ENCODE measurements at regions of chr6 and their contacts with region 1.

Region 1: DNA sequence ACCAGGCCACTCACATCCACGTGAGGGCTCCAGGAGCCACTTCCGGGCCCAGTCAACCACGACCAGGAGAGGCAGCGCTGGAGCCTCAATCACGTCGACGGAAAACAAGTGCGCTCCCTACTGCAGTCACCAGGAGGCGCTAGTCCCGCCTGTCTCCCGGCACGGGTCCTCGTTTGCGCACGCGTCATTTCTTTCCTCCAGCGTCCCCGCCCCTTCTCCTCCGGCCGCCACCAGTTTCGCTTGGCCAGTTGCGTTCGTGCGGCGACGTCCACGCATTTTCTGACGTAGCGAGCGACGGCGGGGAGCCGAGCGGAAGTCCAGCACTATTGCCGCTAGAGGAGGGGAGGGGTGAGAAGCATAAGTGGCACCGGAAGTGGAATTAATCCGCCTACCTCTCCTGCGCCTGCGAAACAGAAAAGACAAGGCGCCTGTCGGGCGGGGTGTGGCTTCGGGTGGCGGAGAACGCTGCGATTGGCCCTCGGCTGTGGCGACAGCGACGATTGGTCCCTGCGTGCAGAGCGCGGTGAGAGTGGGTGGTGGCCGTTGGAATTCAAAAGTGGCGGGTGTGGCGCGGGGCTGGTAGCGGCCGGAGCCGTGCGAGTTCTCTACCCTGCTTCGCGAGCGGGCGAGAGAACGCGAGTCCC is at the start of gene KIFC1:
- DNase-seq: peak; percentile 99 to 100
- ATAC-seq: peak; percentile 87 to 96 (median 88)
- H3K4me3 ChIP-seq: peak within 1 kb of the TSS; percentile 67
- H3K4me3 Mint-ChIP-seq: peak within 1 kb of the TSS; percentile 92
- H3K27ac ChIP-seq: peak within 1 kb of the TSS; percentile 85
- H3K27ac Mint-ChIP-seq: peak within 1 kb of the TSS; percentile 93
- H3K4me1 ChIP-seq: peaks cover 18% of the 10 kb centered on the region
- H3K4me1 Mint-ChIP-seq: peaks cover 25 to 29% of the 10 kb centered on the region in 2 donors
- H3K27me3 ChIP-seq: no peaks in the 10 kb centered on the region
- H3K27me3 Mint-ChIP-seq: no peaks in the 10 kb centered on the region
- CTCF ChIP-seq: peak; percentile 96
- total RNA-seq, gene KIFC1: 2.7 to 4.6 (median 3.3) TPM

Region 2: GRCh38 chr6:33313709-33314514 is 77.5 kb before region 1 on chr6 and contains the start of gene TAPBP:
- intact Hi-C with region 1: loop called (anchors 1 kb)
- DNase-seq: peak; percentile 84 to 96
- ATAC-seq: peak; percentile 56 to 73 (median 68)
- H3K4me3 ChIP-seq: peak within 1 kb of the TSS; percentile 91
- H3K4me3 Mint-ChIP-seq: peak within 1 kb of the TSS; percentile 96
- H3K27ac ChIP-seq: peak within 1 kb of the TSS; percentile 98
- H3K27ac Mint-ChIP-seq: peak within 1 kb of the TSS; percentile 98 to 99
- H3K4me1 ChIP-seq: peaks cover 59% of the 10 kb centered on the region
- H3K4me1 Mint-ChIP-seq: peaks cover 40 to 74% of the 10 kb centered on the region in 2 donors
- H3K27me3 ChIP-seq: no peaks in the 10 kb centered on the region
- H3K27me3 Mint-ChIP-seq: no peaks in the 10 kb centered on the region
- CTCF ChIP-seq: no peak
- total RNA-seq, gene TAPBP: 404 to 457 (median 446) TPM

Region 3: DNA sequence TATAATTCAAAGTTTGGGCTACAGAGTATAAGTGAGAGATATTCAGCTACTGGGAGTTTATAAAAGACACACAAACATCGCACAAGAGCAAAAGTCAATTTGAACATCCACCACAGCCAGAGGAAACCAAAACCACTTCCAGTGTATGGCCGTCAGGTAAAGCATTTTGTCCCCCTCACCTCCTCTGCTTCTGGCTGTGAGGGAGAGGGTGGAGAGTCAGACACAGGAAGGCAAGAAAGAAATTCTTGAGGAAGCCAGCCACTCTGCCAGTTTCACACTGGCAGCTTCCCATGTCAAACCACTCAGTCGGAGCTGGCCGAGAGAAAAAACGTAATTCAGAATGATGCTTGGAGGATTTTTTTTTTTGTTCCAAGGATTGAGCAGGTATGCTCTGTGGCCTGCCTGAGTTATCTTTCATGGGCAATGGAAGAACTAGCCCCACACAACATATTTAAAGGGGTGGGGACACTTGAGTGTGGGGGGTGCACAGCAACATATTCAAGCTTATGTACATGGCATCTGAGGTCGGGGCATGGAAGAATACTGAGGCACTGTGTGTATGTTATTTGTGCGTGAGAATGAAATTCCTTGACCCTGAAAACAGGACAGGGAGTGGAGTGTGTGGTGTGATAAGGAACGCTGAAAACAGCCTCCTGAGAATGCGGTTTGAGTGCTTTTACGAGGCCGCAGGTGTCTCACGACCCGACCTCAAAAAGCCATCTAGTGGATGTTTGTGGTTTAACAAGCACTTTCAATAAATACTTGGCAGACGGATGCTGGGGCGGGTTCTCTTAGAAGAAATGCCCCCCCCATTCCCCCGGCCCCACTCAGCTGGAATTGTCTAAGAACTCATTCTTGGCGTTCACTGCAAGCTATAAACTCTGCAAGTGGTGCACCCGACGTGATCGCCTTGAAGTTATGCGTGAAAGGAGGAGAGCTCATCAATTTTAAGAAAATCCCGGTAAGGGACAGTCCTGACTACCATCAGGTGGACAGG is 46.4 kb before region 1 on chr6:
- intact Hi-C with region 1: loop called (anchors 1 kb)
- DNase-seq: peak; percentile 52 to 93
- ATAC-seq: peak; percentile 53 to 66 (median 54)
- H3K4me3 ChIP-seq: peak overlapping the region; percentile 21
- H3K4me3 Mint-ChIP-seq: peak overlapping the region; percentile 85
- H3K27ac ChIP-seq: peak overlapping the region; percentile 89
- H3K27ac Mint-ChIP-seq: peak overlapping the region; percentile 90 to 94
- H3K4me1 ChIP-seq: peaks cover 50% of the 10 kb centered on the region
- H3K4me1 Mint-ChIP-seq: peaks cover 25 to 31% of the 10 kb centered on the region in 2 donors
- H3K27me3 ChIP-seq: no peaks in the 10 kb centered on the region
- H3K27me3 Mint-ChIP-seq: no peaks in the 10 kb centered on the region
- CTCF ChIP-seq: peak; percentile 73

Region 4: GRCh38 chr6:33356295-33356694 is 35.1 kb before region 1 on chr6:
- intact Hi-C with region 1: no loop called
- DNase-seq: no peak
- ATAC-seq: no peak
- H3K4me3 ChIP-seq: no peak overlapping the region
- H3K4me3 Mint-ChIP-seq: no peak overlapping the region
- H3K27ac ChIP-seq: no peak overlapping the region
- H3K27ac Mint-ChIP-seq: no peak overlapping the region
- H3K4me1 ChIP-seq: no peaks in the 10 kb centered on the region
- H3K4me1 Mint-ChIP-seq: no peaks in the 10 kb centered on the region
- H3K27me3 ChIP-seq: no peaks in the 10 kb centered on the region
- H3K27me3 Mint-ChIP-seq: no peaks in the 10 kb centered on the region
- CTCF ChIP-seq: no peak

Region 5: GRCh38 chr6:33417903-33418689 is 26.7 kb after region 1 on chr6 and contains the start of gene CUTA:
- intact Hi-C with region 1: loop called (anchors 2 kb)
- DNase-seq: peak; percentile 98 to 100
- ATAC-seq: peak; percentile 83 to 94 (median 84)
- H3K4me3 ChIP-seq: peak within 1 kb of the TSS; percentile 80
- H3K4me3 Mint-ChIP-seq: peak within 1 kb of the TSS; percentile 97
- H3K27ac ChIP-seq: peak within 1 kb of the TSS; percentile 95
- H3K27ac Mint-ChIP-seq: peak within 1 kb of the TSS; percentile 100
- H3K4me1 ChIP-seq: peaks cover 55% of the 10 kb centered on the region
- H3K4me1 Mint-ChIP-seq: peaks cover 55 to 72% of the 10 kb centered on the region in 2 donors
- H3K27me3 ChIP-seq: no peaks in the 10 kb centered on the region
- H3K27me3 Mint-ChIP-seq: no peaks in the 10 kb centered on the region
- CTCF ChIP-seq: no peak
- total RNA-seq, gene CUTA: 166 to 186 (median 184) TPM

Region 6: DNA sequence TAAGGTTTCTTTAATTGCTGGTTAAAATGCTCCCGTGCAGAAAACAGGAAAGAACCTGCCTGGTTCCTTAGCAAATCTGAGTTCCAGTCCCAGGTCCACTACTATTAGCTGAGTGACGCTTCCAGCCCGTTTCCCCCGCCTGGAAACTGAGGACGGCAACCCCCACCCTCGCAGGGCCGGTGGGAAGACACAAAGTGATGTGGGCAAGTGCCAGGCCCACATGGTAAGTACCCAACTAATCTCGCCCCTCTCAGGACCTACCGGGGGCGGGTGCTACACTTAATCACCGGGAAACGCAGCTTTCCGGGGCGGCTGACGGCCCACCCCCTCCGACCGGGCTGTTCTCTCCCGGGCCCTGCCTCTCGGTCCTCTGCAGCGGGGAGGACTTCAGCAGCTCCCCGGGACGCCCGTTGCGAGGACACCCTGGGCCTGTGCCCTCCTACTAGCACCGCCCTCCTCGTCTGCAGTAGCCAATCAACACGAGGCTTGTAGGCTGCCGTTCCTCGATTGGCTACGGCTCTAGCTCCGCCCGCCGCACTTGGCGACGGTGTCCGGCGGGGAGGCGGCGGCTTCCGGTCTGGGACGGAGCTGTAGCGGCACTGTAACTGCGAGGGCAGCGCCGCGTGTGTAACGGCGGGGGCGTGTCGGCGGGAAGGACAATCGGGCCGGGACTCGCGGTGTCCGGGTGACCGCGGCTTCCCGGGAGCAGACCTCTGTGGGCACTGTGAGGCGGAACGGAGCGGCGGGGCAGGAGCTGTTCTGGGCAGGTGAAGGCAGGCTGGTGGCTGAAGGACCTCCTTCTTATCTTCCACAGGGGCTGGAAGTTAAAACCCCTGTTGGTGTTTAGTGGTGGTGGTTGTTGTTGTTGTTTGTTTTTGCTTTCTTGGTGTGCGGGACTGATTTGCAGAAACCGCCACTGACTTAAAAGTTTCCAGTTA is 62.9 kb after region 1 on chr6 and contains the start of gene ZBTB9:
- intact Hi-C with region 1: loop called (anchors 1 kb)
- DNase-seq: peak; percentile 94 to 96
- ATAC-seq: peak; percentile 98 to 100 (median 99)
- H3K4me3 ChIP-seq: peak within 1 kb of the TSS; percentile 62
- H3K4me3 Mint-ChIP-seq: peak within 1 kb of the TSS; percentile 97
- H3K27ac ChIP-seq: peak within 1 kb of the TSS; percentile 46
- H3K27ac Mint-ChIP-seq: peak within 1 kb of the TSS; percentile 89 to 98
- H3K4me1 ChIP-seq: peaks cover 23% of the 10 kb centered on the region
- H3K4me1 Mint-ChIP-seq: peaks cover 28 to 42% of the 10 kb centered on the region in 2 donors
- H3K27me3 ChIP-seq: no peaks in the 10 kb centered on the region
- H3K27me3 Mint-ChIP-seq: no peaks in the 10 kb centered on the region
- CTCF ChIP-seq: no peak
- total RNA-seq, gene ZBTB9: 3.8 to 5.1 (median 3.9) TPM

Region 7: DNA sequence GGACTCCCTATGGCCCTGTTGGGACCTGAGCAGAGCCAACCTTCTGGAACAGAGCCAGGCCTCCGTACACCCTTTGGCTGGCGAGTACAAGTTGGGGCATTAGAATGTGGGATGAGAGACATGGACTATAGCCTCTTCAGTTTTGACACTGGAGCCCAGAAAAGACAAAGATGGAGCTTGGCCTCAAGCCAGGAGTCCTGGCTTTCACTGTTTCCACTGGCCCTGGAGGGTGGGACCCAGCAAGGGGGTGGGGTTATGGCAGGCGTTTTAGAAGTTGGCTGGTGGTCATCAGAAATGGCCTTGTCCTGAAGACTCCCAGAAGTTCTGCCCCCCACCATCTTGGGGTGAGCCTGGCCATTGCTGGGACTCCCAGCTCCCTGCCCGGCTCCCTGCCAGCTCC is 251.5 kb after region 1 on chr6:
- intact Hi-C with region 1: no loop called
- DNase-seq: no peak
- ATAC-seq: no peak
- H3K4me3 ChIP-seq: no peak overlapping the region
- H3K4me3 Mint-ChIP-seq: no peak overlapping the region
- H3K27ac ChIP-seq: no peak overlapping the region
- H3K27ac Mint-ChIP-seq: peak overlapping the region in 1 of 2 donors; percentile 60
- H3K4me1 ChIP-seq: peaks cover 13% of the 10 kb centered on the region
- H3K4me1 Mint-ChIP-seq: peaks cover 33 to 63% of the 10 kb centered on the region in 2 donors
- H3K27me3 ChIP-seq: no peaks in the 10 kb centered on the region
- H3K27me3 Mint-ChIP-seq: no peaks in the 10 kb centered on the region
- CTCF ChIP-seq: no peak

Measured in natural killer cell (primary cell).